ENCODE measurements at regions of chr10 and their contacts with region 1.

Region 1: DNA sequence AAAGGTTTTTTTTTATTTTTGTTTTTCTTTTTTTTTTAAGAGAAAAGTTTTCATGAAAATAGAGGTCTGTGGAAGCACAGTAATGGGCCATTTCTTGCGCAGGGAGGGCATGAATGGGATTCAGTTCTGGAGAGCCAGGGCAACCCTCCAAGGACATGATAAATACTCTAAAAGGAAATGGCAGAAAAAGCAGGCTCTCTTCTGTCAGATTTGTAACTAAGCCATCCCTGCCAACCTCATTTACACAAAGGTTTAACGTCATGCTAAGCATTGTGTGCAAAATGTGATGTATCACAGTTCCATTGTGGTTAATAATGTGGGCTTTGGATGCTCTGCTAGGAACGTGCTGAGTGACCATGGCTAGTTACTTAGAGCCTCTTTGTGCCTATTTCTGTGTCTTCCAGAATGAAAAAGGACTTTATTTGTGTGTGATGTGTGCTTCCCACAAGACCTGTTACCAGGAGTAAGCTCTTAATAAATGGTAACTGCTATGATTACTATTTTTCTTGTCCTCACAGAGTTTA is 1095.9 kb upstream of the SORCS1 start:
- DNase-seq: no peak
- H3K4me3 ChIP-seq: no peak overlapping the region
- H3K4me3 Mint-ChIP-seq: no peak overlapping the region
- H3K27ac ChIP-seq: no peak overlapping the region
- H3K27ac Mint-ChIP-seq: no peak overlapping the region
- H3K4me1 ChIP-seq: no peaks in the 10 kb centered on the region
- H3K4me1 Mint-ChIP-seq: no peaks in the 10 kb centered on the region
- H3K27me3 ChIP-seq: no peaks in the 10 kb centered on the region
- H3K27me3 Mint-ChIP-seq: no peaks in the 10 kb centered on the region

Region 2: GRCh38 chr10:108187408-108188012 is 72.9 kb before region 1 on chr10:
- CTCF ChIA-PET with region 1: no interaction called
- POLR2A ChIA-PET with region 1: no interaction called
- intact Hi-C with region 1: loop called (anchors 2 kb)
- DNase-seq: no peak
- H3K4me3 ChIP-seq: no peak overlapping the region
- H3K4me3 Mint-ChIP-seq: no peak overlapping the region
- H3K27ac ChIP-seq: no peak overlapping the region
- H3K27ac Mint-ChIP-seq: no peak overlapping the region
- H3K4me1 ChIP-seq: no peaks in the 10 kb centered on the region
- H3K4me1 Mint-ChIP-seq: no peaks in the 10 kb centered on the region
- H3K27me3 ChIP-seq: no peaks in the 10 kb centered on the region
- H3K27me3 Mint-ChIP-seq: no peaks in the 10 kb centered on the region